Transverse colon (tissue), 4 donors: ENCODE measurements at regions of chr19 and their contacts with region 1.

Region 1: DNA sequence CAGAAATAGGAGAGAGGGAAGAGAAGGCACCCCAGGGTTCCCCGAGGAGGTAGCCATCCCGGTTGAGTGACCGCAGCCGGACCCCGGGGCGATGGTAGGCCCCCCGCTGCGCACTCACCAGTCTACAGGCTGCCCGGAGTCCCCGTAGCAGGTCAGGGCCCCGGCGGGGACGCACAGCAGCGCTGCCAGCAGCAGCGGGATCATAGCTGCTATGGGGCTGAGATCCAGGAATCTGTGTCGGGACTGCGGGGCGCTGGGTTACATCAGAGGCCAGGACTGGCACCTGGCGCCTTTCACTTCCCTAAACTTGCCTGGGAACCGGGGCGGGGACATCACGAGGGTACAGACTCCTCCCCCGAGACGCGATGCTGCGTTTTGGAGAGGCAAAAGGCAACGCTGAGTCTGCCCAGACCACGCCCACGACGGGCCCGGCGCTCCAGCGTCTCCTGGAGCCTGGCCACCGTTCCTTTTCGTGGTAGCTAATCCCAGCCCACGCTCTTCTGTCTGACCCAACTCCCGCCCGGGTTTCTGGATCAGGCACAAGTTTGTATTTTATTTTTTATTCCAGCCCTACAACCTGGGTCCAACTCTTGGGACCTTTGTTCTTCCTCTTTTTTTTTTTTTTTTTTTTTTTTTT is at the start of gene DNASE2:
- DNase-seq: peak; percentile 97
- H3K4me3 ChIP-seq: peak within 1 kb of the TSS; percentile 64 to 81 (median 72)
- H3K27ac ChIP-seq: peak within 1 kb of the TSS; percentile 82 to 94 (median 90)
- H3K4me1 ChIP-seq: peaks cover 0 to 27% (median 25%) of the 10 kb centered on the region in 4 donors
- H3K27me3 ChIP-seq: peaks cover 13% of the 10 kb centered on the region
- CTCF ChIP-seq: no peak
- EP300 ChIP-seq: no peak
- POLR2A ChIP-seq: peak; percentile 88
- total RNA-seq, gene DNASE2: 24.6 to 34.4 (median 34.4) TPM

Region 2: DNA sequence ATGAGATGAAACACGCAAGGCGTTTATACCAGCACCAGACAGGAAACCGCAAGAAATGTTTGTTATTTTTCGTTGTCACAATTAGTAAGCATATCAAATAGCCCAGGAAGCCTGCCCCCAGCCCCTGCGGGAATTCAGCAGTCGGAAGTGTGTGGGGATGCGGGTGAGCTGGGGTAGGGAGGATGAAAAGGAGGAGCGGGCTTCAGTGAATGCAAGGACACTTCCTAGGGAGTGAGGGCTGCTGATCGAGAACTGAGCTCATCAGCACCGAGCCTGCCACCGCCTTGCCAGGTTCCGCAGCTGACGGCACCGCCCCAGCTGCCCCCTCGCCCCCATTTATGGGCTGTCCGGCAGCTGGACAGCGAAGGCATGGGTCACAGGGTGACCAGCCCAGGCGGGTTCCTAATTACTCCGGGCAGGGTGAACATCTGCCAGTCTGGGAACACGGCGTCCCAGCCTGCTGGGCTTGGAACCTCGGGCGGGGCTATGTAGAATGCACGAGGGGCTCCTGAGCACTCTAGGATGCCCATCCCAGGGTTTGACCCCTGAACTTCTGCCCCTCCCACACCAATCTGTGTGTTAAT is 131.3 kb before region 1 on chr19:
- in situ Hi-C with region 1: no loop called
- intact Hi-C with region 1: no loop called
- DNase-seq: peak; percentile 69
- H3K4me3 ChIP-seq: no peak overlapping the region
- H3K27ac ChIP-seq: peak overlapping the region; percentile 50 to 57 (median 55)
- H3K4me1 ChIP-seq: peaks cover 0 to 5% (median 0%) of the 10 kb centered on the region in 4 donors
- H3K27me3 ChIP-seq: peaks cover 19% of the 10 kb centered on the region
- CTCF ChIP-seq: no peak
- EP300 ChIP-seq: peak; percentile 93
- POLR2A ChIP-seq: peak; percentile 36

Region 3: GRCh38 chr19:12945479-12946091 is 64.3 kb after region 1 on chr19 and contains the start of gene RAD23A:
- in situ Hi-C with region 1: no loop called
- intact Hi-C with region 1: loop called (anchors 10 kb)
- DNase-seq: peak; percentile 99
- H3K4me3 ChIP-seq: peak within 1 kb of the TSS; percentile 67 to 92 (median 83)
- H3K27ac ChIP-seq: peak within 1 kb of the TSS; percentile 95 to 97 (median 96)
- H3K4me1 ChIP-seq: peaks cover 10 to 48% (median 22%) of the 10 kb centered on the region in 4 donors
- H3K27me3 ChIP-seq: no peaks in the 10 kb centered on the region
- CTCF ChIP-seq: peak in 1 of 5 experiments; percentile 27
- EP300 ChIP-seq: no peak
- POLR2A ChIP-seq: peak; percentile 91
- total RNA-seq, gene RAD23A: 57.9 to 87.9 (median 75.9) TPM

Region 4: DNA sequence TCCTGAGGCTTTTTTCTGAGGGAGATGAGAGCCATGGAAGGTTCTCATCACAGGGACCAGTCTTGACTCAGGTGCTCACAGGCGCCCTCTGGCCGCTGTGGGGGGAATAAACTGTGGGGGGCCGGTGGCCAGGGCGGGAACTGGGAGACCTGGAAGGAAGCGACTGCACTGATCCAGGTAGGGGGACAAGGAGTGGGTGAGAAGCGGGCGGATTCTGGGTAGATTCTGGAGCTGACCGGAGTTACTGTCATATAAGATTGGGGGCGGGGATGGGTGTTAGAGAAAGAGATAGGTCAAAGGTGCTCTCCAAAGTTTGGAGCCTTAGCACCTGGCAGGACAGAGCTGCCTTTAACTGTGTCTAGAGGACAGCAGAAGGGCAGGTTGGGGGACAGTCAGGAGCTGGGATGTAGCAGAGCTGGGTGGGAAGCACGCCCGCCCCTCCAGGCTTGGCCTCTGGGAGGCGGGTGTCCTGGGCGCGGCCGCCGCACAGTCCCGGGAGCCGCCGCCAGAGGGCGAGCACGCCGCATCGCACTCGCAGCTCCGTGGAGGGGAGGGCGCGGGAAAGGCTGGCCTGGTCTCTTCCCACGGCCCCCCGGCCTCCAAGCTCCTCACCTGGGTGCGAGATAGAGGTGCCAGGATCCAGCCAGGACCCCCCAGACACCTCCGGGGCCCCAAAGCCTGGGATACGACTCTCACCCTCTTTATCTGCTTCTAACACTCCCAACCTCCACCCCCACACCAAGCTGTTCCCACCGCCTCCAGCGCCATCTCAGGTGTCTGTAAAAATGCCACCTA is 83.9 kb after region 1 on chr19:
- in situ Hi-C with region 1: loop called in 1 of 4 experiments (anchors 5 kb)
- intact Hi-C with region 1: loop called (anchors 5 kb)
- DNase-seq: peak; percentile 88
- H3K4me3 ChIP-seq: peak overlapping the region; percentile 22 to 63 (median 36)
- H3K27ac ChIP-seq: peak overlapping the region; percentile 67 to 78 (median 76)
- H3K4me1 ChIP-seq: peaks cover 0 to 10% (median 6%) of the 10 kb centered on the region in 4 donors
- H3K27me3 ChIP-seq: no peaks in the 10 kb centered on the region
- CTCF ChIP-seq: peak; percentile 87 to 99 (median 92)
- EP300 ChIP-seq: no peak
- POLR2A ChIP-seq: no peak